Activated CD8-positive, alpha-beta T cell treated with anti-CD3 and anti-CD28 coated beads for 36 hours (primary cell): ENCODE measurements at regions of chr1 and their contacts with region 1.

Region 1: DNA sequence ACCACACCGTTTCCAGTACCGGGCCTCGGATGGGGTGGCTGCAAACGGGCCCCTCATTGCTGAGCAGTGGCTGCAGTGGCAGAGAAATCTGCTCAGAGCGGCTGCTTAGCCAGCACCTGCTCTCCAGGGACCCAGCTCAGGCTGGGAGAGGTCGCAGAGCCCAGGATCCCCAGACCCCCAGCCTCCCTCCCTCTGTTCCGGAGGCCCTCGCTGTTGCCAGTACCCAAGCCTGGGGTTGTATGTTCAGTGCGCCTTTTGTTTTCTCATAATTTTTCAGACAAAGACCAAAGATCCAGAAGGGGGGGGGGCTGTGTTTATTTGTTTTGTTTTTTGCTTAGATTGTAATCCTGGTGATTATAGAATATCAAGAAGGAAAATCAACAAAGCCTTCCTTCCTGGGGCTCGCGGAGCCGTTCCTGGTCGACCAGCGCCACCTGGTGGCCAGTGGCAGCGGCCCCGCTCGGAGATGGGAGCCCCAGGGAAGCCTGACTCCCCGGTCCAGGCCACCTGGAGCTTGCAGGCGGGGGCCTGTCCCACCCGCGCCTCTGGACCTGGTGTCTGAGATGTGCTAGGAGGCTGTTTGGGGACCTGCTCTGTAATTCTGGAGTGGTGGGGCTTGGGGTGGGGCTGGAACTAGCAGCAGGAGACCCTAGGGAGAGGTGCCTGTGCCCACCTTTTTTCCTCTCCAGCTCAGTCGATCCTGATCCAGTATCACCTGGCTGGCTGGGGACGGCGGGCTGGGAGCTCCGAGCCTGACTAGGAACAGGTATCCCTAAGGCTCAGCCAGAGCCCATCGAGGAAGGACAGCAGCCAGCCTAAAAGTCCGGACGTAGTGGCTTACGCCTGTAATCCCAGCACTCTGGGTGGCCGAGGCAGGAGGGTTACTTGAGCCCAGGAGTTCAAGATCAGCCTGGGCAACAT is 123.9 kb upstream of the VAMP3 start:
- DNase-seq: peak; percentile 70
- ATAC-seq: peak; percentile 55
- H3K4me3 Mint-ChIP-seq: no peak overlapping the region
- H3K27ac Mint-ChIP-seq: no peak overlapping the region
- H3K4me1 Mint-ChIP-seq: no peaks in the 10 kb centered on the region
- H3K27me3 Mint-ChIP-seq: no peaks in the 10 kb centered on the region
- CTCF ChIP-seq: peak; percentile 89

Region 2: GRCh38 chr1:7454052-7454815 is 193.0 kb before region 1 on chr1:
- CTCF ChIA-PET with region 1: interaction called, 5 read pairs
- POLR2A ChIA-PET with region 1: no interaction called
- intact Hi-C with region 1: loop called (anchors 10 kb)
- DNase-seq: peak; percentile 12
- ATAC-seq: no peak
- H3K4me3 Mint-ChIP-seq: no peak overlapping the region
- H3K27ac Mint-ChIP-seq: no peak overlapping the region
- H3K4me1 Mint-ChIP-seq: no peaks in the 10 kb centered on the region
- H3K27me3 Mint-ChIP-seq: no peaks in the 10 kb centered on the region
- CTCF ChIP-seq: no peak

Region 3: DNA sequence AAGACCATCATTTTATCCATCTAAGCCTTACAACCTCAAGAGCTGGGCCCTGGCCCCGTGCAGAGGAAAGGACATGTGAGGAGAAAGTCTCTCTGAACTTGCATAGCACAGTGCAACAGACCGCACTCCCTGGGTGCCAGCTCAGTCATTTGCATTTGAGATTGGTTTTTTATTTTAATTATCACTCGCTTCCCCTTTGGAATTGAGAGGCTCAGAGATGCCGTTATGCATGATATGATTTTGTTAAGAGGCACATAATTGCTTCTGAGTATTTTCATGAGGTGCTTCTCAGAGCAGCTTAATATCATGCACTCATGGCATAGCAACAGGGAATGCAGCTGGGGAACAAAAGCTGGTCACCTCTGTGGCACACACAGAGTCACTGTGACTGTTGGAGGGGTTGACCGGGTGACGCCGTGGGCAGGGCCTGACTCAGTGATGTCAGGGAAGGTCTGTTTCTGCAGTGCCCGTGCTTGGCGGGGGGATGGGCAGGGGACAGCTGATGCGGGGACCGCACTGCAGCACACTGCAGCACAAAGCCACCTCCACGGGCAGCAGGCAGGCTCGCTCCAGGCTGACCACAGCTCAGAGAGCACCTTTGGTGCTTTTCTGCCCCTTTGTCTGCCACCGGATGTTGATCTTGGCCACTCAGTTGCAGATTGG is 80.7 kb after region 1 on chr1:
- CTCF ChIA-PET with region 1: no interaction called
- POLR2A ChIA-PET with region 1: no interaction called
- intact Hi-C with region 1: no loop called
- DNase-seq: no peak
- ATAC-seq: no peak
- H3K4me3 Mint-ChIP-seq: no peak overlapping the region
- H3K27ac Mint-ChIP-seq: no peak overlapping the region
- H3K4me1 Mint-ChIP-seq: peaks cover 2% of the 10 kb centered on the region
- H3K27me3 Mint-ChIP-seq: peaks cover 7% of the 10 kb centered on the region
- CTCF ChIP-seq: no peak

Region 4: GRCh38 chr1:7770997-7771822 is 124.0 kb after region 1 on chr1 and contains the start of gene VAMP3:
- CTCF ChIA-PET with region 1: no interaction called
- POLR2A ChIA-PET with region 1: no interaction called
- intact Hi-C with region 1: no loop called
- DNase-seq: peak; percentile 87
- ATAC-seq: peak; percentile 94
- H3K4me3 Mint-ChIP-seq: peak within 1 kb of the TSS; percentile 80
- H3K27ac Mint-ChIP-seq: peak within 1 kb of the TSS; percentile 70
- H3K4me1 Mint-ChIP-seq: peaks cover 32% of the 10 kb centered on the region
- H3K27me3 Mint-ChIP-seq: peaks cover 8% of the 10 kb centered on the region
- CTCF ChIP-seq: no peak
- total RNA-seq, gene VAMP3: 13.2 to 20.9 TPM

Region 5: GRCh38 chr1:8439015-8439702 is 791.9 kb after region 1 on chr1:
- CTCF ChIA-PET with region 1: no interaction called
- POLR2A ChIA-PET with region 1: no interaction called
- intact Hi-C with region 1: no loop called
- DNase-seq: no peak
- ATAC-seq: no peak
- H3K4me3 Mint-ChIP-seq: no peak overlapping the region
- H3K27ac Mint-ChIP-seq: no peak overlapping the region
- H3K4me1 Mint-ChIP-seq: peaks cover 8% of the 10 kb centered on the region
- H3K27me3 Mint-ChIP-seq: no peaks in the 10 kb centered on the region
- CTCF ChIP-seq: no peak